ENCODE measurements at regions of chr1 and their contacts with region 1.

Region 1: DNA sequence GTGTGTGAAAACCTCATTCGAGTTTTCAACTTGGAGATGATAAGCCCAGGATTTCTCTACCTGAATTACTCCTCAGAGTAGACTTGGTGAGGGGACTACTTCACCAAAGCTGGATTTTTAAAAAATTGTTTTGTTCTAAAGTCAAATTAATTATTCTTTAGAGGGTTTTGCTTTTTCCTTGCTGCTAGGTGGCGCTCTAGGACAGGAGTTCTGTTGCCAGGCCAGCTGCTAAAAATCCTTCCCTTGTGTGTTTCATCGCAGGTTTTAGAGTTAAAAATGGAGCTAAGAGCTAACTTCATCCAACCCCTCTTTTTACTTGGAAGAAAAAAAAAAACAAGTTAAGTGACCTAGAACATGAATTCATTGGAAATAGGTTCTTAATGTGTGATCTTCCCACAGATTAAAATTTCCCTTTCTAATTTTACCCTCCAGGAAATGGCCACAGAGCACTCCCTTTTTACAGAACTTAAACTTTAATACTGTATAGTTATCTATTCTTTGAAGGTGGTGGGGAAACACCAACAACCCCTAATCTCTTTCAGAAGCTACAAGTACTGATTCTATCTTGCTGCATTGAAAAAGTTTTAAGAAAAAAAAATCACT is 36.7 kb upstream of the FAM163A start:
- DNase-seq: peak; percentile 40
- H3K4me3 Mint-ChIP-seq: no peak overlapping the region
- H3K27ac Mint-ChIP-seq: no peak overlapping the region
- H3K4me1 Mint-ChIP-seq: peaks cover 5% of the 10 kb centered on the region
- H3K27me3 Mint-ChIP-seq: peaks cover 2% of the 10 kb centered on the region

Region 2: GRCh38 chr1:179809506-179810366 is 103.3 kb after region 1 on chr1:
- intact Hi-C with region 1: loop called (anchors 1 kb)
- DNase-seq: peak; percentile 35
- H3K4me3 Mint-ChIP-seq: no peak overlapping the region
- H3K27ac Mint-ChIP-seq: no peak overlapping the region
- H3K4me1 Mint-ChIP-seq: peaks cover 4% of the 10 kb centered on the region
- H3K27me3 Mint-ChIP-seq: peaks cover 8% of the 10 kb centered on the region